RWPE1 (cell line): ENCODE measurements at regions of chr11 and their contacts with region 1.

Region 1: GRCh38 chr11:66222358-66223149 is 45.9 kb upstream of the RAB1B start:
- DNase-seq: peak; percentile 86
- H3K27ac ChIP-seq: peak overlapping the region; percentile 38; the same call in 1 of the 2 replicates
- CTCF ChIP-seq: peak; percentile 97

Region 2: DNA sequence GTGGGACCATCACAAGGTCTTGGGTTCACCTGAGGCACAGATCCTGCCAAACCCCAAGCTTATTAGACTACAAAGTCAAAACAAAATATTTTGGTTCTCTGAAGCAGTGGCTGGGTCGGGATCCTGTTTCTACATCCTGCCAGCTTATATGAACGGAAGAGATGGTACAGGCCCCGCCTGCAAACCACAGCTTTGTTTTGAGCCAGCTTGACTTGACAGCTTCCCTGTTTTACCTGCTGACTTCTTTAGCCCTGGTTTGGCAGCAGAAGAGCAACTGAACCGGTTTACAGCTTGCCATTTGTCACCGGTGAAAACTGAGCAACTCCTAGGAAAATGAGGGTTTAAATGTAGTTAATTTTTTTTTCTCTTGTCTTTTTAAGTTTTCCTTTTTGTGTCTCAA is 141.0 kb before region 1 on chr11:
- CTCF ChIA-PET with region 1: no interaction called
- POLR2A ChIA-PET with region 1: interaction called, 11 read pairs
- DNase-seq: peak; percentile 72
- H3K27ac ChIP-seq: peak overlapping the region; percentile 84
- CTCF ChIP-seq: no peak

Region 3: GRCh38 chr11:66421492-66422205 is 199.1 kb after region 1 on chr11:
- CTCF ChIA-PET with region 1: no interaction called
- POLR2A ChIA-PET with region 1: no interaction called
- DNase-seq: peak; percentile 83
- H3K27ac ChIP-seq: no peak overlapping the region
- CTCF ChIP-seq: no peak